Mammary epithelial cell (primary cell): ENCODE measurements at regions of chr18 and their contacts with region 1.

Region 1: GRCh38 chr18:55343396-55344073 is 244.5 kb downstream of the TCF4 start:
- DNase-seq: peak; percentile 8
- H3K4me3 ChIP-seq: no peak overlapping the region
- H3K27ac ChIP-seq: no peak overlapping the region
- H3K4me1 ChIP-seq: no peaks in the 10 kb centered on the region
- H3K27me3 ChIP-seq: no peaks in the 10 kb centered on the region
- CTCF ChIP-seq: peak; percentile 49 to 55

Region 2: DNA sequence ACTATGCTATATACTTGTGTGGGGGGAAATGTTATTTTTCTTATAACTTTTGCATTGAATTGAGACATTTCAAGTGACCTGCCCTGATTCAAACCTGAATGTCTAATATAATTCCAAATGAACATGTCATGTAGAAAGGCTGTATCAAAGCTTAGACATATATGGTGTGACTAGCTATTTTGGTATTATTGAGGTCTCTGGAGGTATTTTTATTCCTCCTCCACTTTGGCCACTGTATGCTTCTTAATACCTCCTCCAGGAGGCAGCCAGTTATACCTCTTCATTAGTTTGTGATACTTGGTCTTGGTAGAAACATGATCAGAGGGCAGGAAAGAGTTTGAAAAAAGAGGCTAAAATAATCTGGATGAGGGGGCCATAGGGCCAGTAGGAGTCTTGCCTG is 27.4 kb after region 1 on chr18:
- CTCF ChIA-PET with region 1: no interaction called
- dilution Hi-C with region 1: no loop called
- in situ Hi-C with region 1: no loop called
- intact Hi-C with region 1: loop called (anchors 1 kb)
- DNase-seq: no peak
- H3K4me3 ChIP-seq: no peak overlapping the region
- H3K27ac ChIP-seq: no peak overlapping the region
- H3K4me1 ChIP-seq: no peaks in the 10 kb centered on the region
- H3K27me3 ChIP-seq: no peaks in the 10 kb centered on the region
- CTCF ChIP-seq: no peak

Region 3: GRCh38 chr18:55415258-55415871 is 71.8 kb after region 1 on chr18:
- CTCF ChIA-PET with region 1: interaction called, 3 read pairs
- dilution Hi-C with region 1: no loop called
- in situ Hi-C with region 1: no loop called
- intact Hi-C with region 1: loop called (anchors 2 kb)
- DNase-seq: peak; percentile 43
- H3K4me3 ChIP-seq: no peak overlapping the region
- H3K27ac ChIP-seq: no peak overlapping the region
- H3K4me1 ChIP-seq: no peaks in the 10 kb centered on the region
- H3K27me3 ChIP-seq: no peaks in the 10 kb centered on the region
- CTCF ChIP-seq: peak; percentile 85 to 90